Gastrocnemius medialis (tissue), 4 donors: ENCODE measurements at regions of chr10 and their contacts with region 1.

Region 1: DNA sequence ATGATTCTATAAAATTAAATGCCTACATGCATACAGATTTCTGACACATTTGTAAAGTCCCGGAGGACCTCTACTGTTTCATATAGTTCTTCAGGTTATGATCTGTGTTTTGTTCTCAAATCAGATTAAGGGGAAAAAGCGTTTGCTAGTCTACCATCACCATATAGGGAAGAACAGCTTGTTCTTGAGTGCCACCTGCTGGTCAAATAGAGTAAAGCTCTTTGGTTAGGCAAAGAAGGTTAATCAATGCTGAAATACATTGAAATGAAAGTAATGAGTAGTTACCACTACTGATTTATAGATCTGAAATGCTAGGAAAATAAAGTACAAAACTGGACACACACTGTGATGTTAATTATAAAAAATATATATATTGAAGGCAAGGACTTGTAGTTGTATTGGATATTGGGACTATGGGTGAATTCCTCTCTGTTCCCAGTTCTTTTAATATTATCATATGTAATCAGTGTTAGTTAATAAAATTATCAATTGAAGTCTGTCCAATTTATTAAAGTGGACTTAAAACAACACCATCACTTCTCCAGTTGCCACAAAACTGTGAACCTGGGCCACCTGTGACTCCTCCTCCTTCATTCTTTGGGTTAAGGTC is 72.6 kb upstream of the PDLIM1 start:
- DNase-seq: no peak
- ATAC-seq: peak; percentile 45 to 60
- H3K4me3 ChIP-seq: no peak overlapping the region
- H3K27ac ChIP-seq: peak overlapping the region in 3 of 4 donors; percentile 49 to 73 (median 67)
- H3K4me1 ChIP-seq: peaks cover 7 to 12% of the 10 kb centered on the region in 2 donors
- H3K27me3 ChIP-seq: no peaks in the 10 kb centered on the region
- CTCF ChIP-seq: peak; percentile 78 to 94 (median 86)
- POLR2A ChIP-seq: no peak

Region 2: GRCh38 chr10:95133016-95133752 is 230.2 kb before region 1 on chr10:
- in situ Hi-C with region 1: loop called in 1 of 4 experiments (anchors 25 kb)
- intact Hi-C with region 1: loop called (anchors 2 kb)
- DNase-seq: peak; percentile 5 to 61
- ATAC-seq: peak in 1 of 2 donors; percentile 87
- H3K4me3 ChIP-seq: no peak overlapping the region
- H3K27ac ChIP-seq: no peak overlapping the region
- H3K4me1 ChIP-seq: no peaks in the 10 kb centered on the region
- H3K27me3 ChIP-seq: no peaks in the 10 kb centered on the region
- CTCF ChIP-seq: peak; percentile 48 to 70 (median 62)
- POLR2A ChIP-seq: no peak

Region 3: DNA sequence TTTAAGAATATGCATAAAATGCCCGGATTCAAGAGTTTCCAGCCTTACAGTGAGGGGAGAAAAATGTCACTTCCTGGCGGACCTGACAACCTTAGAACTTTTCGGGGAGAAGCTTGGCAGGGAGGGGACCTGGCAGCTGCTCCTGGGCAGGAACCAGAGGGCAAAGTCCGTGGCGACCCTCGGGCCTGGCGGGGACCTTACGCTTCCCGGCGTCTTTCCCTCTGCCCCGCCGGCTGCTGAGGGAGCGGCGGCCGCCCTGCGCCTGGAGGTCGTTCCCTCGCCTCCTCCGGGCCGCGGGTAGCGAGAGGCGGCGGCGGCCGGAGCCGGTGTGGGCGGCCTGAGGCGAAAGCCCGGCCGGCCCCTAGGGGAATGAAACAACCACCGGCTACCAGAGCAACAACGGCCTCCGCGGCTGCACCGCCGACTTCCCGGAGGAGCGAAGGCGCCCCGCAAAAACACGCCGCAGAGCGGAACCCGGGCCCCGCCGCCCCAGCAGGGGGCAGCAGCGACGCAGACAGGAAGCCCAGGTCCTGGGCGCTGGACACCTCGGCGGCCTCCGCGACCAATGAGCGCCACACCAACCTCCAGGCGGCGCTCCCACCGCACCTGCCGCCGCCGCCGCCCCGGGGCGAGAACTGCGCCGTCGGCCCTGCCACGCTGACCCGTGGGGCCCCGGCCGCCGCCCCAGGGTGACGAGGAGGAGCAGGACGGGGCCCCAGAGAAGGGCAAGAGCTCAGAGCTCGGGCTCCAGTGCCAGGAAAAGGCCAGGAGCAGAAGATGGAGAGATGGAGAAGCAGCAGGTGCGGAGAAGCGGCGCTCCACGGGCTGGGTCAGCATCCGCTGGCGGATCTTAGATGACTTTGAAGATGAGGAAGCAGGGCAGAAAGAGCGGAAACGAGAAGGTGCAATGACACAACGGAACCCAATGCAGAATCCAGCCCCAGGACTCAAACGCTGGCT is 179.9 kb before region 1 on chr10:
- in situ Hi-C with region 1: loop called in 2 of 4 experiments (anchors 5 kb)
- intact Hi-C with region 1: loop called (anchors 2 kb)
- DNase-seq: peak; percentile 42 to 53
- ATAC-seq: peak; percentile 91 to 92
- H3K4me3 ChIP-seq: peak overlapping the region; percentile 57 to 79 (median 69)
- H3K27ac ChIP-seq: peak overlapping the region; percentile 45 to 73 (median 64)
- H3K4me1 ChIP-seq: peaks cover 0 to 8% of the 10 kb centered on the region in 2 donors
- H3K27me3 ChIP-seq: no peaks in the 10 kb centered on the region
- CTCF ChIP-seq: peak; percentile 62 to 91 (median 86)
- POLR2A ChIP-seq: no peak

Region 4: DNA sequence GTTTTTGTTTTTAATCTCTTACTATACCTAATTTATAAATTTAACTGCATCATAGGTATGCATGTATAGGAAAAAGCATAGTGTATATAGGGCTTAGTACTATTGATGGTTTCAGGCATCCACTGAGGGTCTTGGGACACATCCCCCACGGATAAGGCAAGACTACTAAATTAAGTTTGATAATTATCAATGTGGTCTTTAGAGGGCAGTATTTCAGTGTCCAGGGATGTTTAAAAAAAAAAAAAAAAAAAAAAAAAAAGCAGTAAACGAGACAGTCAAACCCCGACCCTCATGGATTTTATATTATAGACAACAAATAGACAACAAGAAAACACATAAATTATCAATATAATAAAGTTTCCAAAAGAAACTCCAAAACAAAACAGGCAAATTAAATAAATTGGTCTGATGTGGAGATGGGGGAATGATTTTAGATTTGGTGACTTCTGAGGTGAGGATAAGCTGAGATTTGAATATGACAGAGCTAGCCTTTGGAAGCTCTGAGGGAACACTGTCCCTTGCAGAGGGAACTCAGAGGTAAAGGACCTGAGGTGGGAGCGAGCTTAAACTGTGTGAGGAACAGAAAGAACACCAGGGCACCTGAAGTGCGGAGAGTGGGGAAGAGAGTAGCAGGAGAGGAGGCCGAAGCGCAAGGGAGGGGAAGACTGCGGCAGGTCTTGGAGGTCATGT is 154.6 kb before region 1 on chr10:
- in situ Hi-C with region 1: no loop called
- intact Hi-C with region 1: loop called (anchors 5 kb)
- DNase-seq: no peak
- ATAC-seq: no peak
- H3K4me3 ChIP-seq: no peak overlapping the region
- H3K27ac ChIP-seq: no peak overlapping the region
- H3K4me1 ChIP-seq: no peaks in the 10 kb centered on the region
- H3K27me3 ChIP-seq: no peaks in the 10 kb centered on the region
- CTCF ChIP-seq: peak in 1 of 5 experiments; percentile 19
- POLR2A ChIP-seq: no peak

Region 5: GRCh38 chr10:95246579-95247051 is 116.8 kb before region 1 on chr10:
- in situ Hi-C with region 1: loop called (anchors 5 to 10 kb)
- intact Hi-C with region 1: loop called (anchors 1 kb)
- DNase-seq: peak; percentile 52 to 64
- ATAC-seq: peak; percentile 40 to 65
- H3K4me3 ChIP-seq: no peak overlapping the region
- H3K27ac ChIP-seq: peak overlapping the region; percentile 72 to 85 (median 78)
- H3K4me1 ChIP-seq: peaks cover 50 to 74% of the 10 kb centered on the region in 2 donors
- H3K27me3 ChIP-seq: no peaks in the 10 kb centered on the region
- CTCF ChIP-seq: peak; percentile 72 to 87 (median 83)
- POLR2A ChIP-seq: no peak

Region 6: GRCh38 chr10:95289003-95289920 is 74.1 kb before region 1 on chr10:
- in situ Hi-C with region 1: no loop called
- intact Hi-C with region 1: loop called (anchors 5 kb)
- DNase-seq: peak in 1 of 2 donors; percentile 59
- ATAC-seq: peak; percentile 45 to 62
- H3K4me3 ChIP-seq: peak overlapping the region; percentile 66 to 89 (median 72)
- H3K27ac ChIP-seq: peak overlapping the region; percentile 80 to 97 (median 92)
- H3K4me1 ChIP-seq: peaks cover 32 to 41% of the 10 kb centered on the region in 2 donors
- H3K27me3 ChIP-seq: no peaks in the 10 kb centered on the region
- CTCF ChIP-seq: peak in 4 of 5 experiments; percentile 15 to 34 (median 28)
- POLR2A ChIP-seq: peak; percentile 59 to 78